Activated naive CD4-positive, alpha-beta T cell treated with anti-CD3 and anti-CD28 coated beads, Interleukin-2, amount 10 ng/mL, durations not matched to agents 7 days and 5 days (primary cell): ENCODE measurements at regions of chr3 and their contacts with region 1.

Region 1: GRCh38 chr3:53219895-53220483 is 35.8 kb downstream of the TKT start:
- DNase-seq: peak; percentile 91
- H3K4me3 Mint-ChIP-seq: no peak overlapping the region
- H3K27ac Mint-ChIP-seq: no peak overlapping the region
- H3K4me1 Mint-ChIP-seq: peaks cover 4% of the 10 kb centered on the region
- H3K27me3 Mint-ChIP-seq: peaks cover 24% of the 10 kb centered on the region

Region 2: DNA sequence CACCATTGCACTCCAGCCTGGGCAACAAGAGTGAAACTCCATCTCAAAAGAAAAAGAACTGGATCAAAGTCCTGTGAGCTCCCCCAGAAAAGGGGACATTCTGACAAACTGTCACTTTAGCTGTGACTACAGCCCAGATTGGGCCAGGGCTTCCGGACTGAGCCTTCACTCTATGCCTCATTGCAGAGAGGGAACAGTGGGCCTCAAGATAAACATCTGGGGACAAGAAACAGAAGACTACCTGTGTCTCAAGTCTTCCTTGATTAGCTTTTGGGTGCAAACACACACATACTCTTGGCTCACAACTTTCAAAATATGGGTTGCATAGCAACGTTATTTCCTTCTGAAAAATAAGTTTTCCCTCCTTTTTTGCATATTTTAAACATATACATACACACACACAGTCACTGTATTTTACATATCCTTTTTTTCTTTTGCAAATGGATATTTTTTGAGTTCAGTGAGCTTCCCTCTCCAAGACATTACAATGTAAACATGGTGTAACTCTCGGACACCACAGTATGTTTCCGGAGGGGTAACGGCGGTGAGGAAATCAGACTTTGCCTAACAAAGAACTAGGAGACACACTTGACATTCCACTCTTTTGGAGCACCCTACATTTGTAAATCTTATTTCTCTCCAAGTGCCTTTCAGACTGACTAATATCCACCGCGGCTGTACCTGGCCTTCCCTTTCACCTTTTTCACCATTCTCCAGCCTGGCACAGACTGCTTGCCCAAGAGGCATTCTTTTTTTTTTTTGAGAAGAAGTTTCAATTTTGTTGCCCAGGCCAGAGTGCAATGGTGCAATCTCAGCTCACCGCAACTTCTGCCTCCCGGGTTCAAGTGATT is 32.3 kb after region 1 on chr3:
- CTCF ChIA-PET with region 1: interaction called, 10 read pairs
- DNase-seq: no peak
- H3K4me3 Mint-ChIP-seq: peak overlapping the region; percentile 43
- H3K27ac Mint-ChIP-seq: peak overlapping the region; percentile 60
- H3K4me1 Mint-ChIP-seq: peaks cover 72% of the 10 kb centered on the region
- H3K27me3 Mint-ChIP-seq: peaks cover 1% of the 10 kb centered on the region